Posterior cingulate gyrus (tissue), 11 donors: ENCODE measurements at regions of chr6 and their contacts with region 1.

Region 1: GRCh38 chr6:114304304-114304887 is 38.4 kb downstream of the HS3ST5 start:
- DNase-seq: no peak

Region 2: DNA sequence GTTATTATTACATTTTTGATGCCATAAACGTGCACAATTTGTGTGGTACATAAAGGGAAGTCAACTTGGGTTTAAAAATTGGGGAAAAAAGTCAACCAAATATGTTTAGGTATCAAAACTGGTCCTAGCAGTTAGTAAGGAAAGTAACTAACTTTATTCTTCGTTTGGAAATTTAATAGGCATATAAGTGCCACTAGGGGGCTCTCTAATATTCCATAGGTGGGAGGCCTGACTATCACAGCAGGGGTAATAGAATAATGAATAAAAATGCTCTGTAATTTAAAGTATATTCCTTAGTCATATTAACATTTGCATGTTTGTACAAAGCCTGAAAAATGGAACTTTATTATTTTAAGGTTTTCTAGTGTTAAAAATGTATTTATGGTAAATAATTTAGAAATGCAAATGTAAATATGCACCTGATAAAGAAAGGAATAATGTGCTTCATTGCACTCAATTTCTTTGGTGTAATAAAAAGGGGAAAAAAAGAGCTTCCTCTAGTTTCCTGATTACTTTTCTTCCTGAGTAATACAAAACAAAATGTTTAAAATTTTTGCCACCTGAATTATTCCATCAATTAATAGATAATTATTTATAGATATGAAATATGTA is 207.7 kb before region 1 on chr6:
- intact Hi-C with region 1: loop called (anchors 5 kb)
- DNase-seq: no peak

Region 3: GRCh38 chr6:114157848-114158247 is 146.5 kb before region 1 on chr6:
- intact Hi-C with region 1: loop called (anchors 10 kb)
- DNase-seq: no peak

Region 4: DNA sequence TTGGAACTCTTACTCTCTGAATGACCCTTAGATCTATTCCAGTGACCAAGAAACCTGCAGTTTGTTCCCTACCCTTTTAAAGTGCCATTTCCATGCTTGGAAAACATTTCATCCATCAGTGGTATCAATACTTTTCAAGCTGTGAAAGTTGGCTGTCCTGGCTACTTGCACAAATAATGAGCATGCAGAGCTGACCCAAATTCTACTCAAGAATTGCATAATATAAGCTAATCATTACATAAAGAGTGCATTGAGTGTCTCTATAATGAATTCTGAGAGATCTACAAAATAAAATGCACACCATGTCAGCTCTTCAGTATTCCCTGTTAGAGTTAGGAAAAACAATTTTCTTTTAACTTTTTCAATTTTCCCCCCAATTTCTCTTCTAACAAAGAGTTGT is 219.7 kb after region 1 on chr6:
- intact Hi-C with region 1: no loop called
- DNase-seq: no peak

Region 5: GRCh38 chr6:115310156-115310555 is 1005.8 kb after region 1 on chr6:
- intact Hi-C with region 1: no loop called
- DNase-seq: peak in 1 of 10 donors; percentile 63